ENCODE measurements at regions of chr5 and their contacts with region 1.

Region 1: GRCh38 chr5:179495906-179496455 is 54.4 kb upstream of the RUFY1 start:
- DNase-seq: no peak
- H3K4me3 ChIP-seq: no peak overlapping the region
- H3K27ac ChIP-seq: no peak overlapping the region
- H3K27me3 ChIP-seq: peaks cover 4% of the 10 kb centered on the region
- CTCF ChIP-seq: no peak

Region 2: GRCh38 chr5:179177711-179178475 is 318.1 kb before region 1 on chr5:
- CTCF ChIA-PET with region 1: interaction called, 17 read pairs
- POLR2A ChIA-PET with region 1: no interaction called
- DNase-seq: no peak
- H3K4me3 ChIP-seq: no peak overlapping the region
- H3K27ac ChIP-seq: no peak overlapping the region
- H3K27me3 ChIP-seq: no peaks in the 10 kb centered on the region
- CTCF ChIP-seq: no peak